Colonic mucosa (tissue), 4 donors: ENCODE measurements at regions of chr5 and their contacts with region 1.

Region 1: DNA sequence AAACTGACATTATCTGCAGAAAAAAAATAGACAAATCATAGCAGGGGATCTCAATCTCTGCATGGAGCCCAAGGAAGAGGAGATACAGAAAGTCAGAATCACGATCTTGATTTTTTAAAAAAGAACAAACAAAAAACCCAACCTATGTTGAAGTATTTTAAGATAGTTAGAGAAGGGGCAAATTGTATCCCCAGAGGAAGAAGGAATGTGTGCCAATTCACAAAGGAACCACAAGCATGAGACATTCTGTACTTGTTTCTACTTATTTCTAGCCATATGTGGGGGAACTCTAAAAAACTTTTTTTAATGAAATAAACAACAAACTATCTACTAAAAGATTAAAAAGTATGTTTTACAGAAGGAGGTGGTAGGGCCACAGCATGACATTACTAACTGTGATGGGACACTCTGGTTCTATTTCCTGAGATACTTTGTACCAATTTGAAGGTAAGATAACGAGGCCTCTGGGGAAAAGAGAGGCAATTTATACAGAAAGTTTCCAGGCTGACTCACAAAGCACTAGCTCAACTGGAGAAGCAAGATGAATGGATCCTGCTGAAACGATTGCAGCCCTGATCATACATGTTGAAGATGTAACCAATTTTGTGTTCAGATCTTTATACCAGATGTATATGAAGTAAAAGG is 22.5 kb downstream of the RANBP3L start:
- DNase-seq: no peak
- H3K4me3 ChIP-seq: no peak overlapping the region
- H3K27ac ChIP-seq: no peak overlapping the region
- H3K4me1 ChIP-seq: no peaks in the 10 kb centered on the region
- H3K27me3 ChIP-seq: no peaks in the 10 kb centered on the region
- CTCF ChIP-seq: no peak

Region 2: DNA sequence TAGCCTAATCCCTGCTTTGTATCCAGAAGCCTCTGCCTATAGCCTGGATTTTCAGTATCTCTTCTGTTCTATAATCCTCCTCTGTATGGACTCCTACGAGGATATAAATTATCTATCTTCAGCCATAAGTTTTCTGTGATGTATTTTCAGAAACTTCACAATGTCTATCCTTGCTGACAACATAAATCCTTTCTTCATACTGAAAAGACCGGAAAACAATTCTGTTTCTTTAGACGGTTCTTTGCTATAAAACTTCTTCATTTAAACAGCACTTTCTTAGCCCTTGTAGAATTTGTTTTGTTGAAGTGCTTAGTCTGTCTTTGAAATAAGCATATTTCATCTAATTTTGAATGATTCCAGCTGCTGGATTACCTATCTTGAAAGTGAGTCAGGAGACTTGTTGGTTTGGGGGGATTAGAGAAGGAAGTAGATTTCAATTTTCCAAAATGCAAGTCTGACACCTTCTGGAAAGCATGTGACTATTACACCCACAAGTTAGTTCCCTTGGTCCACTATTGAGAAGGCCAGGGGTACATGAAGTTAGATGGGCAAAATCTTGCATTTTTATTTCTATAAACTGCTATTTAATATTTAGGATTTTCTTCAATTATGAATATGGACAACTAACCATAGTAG is 118.8 kb after region 1 on chr5:
- intact Hi-C with region 1: loop called (anchors 10 kb)
- DNase-seq: no peak
- H3K4me3 ChIP-seq: no peak overlapping the region
- H3K27ac ChIP-seq: no peak overlapping the region
- H3K4me1 ChIP-seq: no peaks in the 10 kb centered on the region
- H3K27me3 ChIP-seq: no peaks in the 10 kb centered on the region
- CTCF ChIP-seq: no peak